Colonic mucosa (tissue), 4 donors: ENCODE measurements at regions of chr3 and their contacts with region 1.

Region 1: GRCh38 chr3:14508961-14509795 is 31.0 kb downstream of the GRIP2 start:
- DNase-seq: peak; percentile 71
- H3K4me3 ChIP-seq: no peak overlapping the region
- H3K27ac ChIP-seq: no peak overlapping the region
- H3K4me1 ChIP-seq: no peaks in the 10 kb centered on the region
- H3K27me3 ChIP-seq: no peaks in the 10 kb centered on the region
- CTCF ChIP-seq: peak; percentile 95

Region 2: DNA sequence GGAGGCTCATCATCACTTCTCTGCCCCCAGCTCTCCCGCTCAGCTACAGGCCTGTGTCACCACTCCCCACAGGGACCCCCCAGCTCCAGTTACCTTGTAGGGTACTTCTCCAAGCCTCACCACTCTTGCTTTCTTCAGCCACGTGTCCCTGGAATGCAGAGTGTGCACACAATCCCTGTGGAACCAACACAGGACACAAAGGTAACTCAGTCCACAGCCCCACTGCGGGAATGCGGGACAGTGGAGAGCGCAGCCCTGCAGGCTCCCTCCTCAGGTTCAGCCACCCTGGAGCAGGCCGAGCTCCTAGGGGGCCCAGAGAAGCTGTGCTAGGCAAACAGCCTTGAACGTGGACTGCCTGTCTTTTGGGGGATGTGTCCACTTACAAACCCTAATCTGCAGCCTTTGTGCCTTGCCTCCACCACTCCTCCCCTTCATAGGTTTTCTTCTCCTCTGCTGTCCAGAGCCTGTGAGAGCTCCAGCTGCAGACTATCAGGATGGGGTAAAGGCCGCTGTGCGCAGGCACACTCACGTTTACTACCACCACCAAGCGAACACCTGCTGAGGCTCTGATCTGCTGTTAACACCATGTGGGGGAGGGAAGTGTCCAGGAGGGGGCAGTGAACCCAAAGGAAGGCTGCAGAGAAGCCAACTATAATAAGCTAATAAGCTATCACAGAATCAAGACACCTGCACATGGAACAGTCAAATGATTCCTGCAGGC is 356.8 kb before region 1 on chr3:
- intact Hi-C with region 1: no loop called
- DNase-seq: no peak
- H3K4me3 ChIP-seq: no peak overlapping the region
- H3K27ac ChIP-seq: no peak overlapping the region
- H3K4me1 ChIP-seq: no peaks in the 10 kb centered on the region
- H3K27me3 ChIP-seq: no peaks in the 10 kb centered on the region
- CTCF ChIP-seq: no peak

Region 3: GRCh38 chr3:14548321-14548729 is 39.1 kb after region 1 on chr3:
- intact Hi-C with region 1: loop called (anchors 5 kb)
- DNase-seq: peak; percentile 56
- H3K4me3 ChIP-seq: no peak overlapping the region
- H3K27ac ChIP-seq: no peak overlapping the region
- H3K4me1 ChIP-seq: no peaks in the 10 kb centered on the region
- H3K27me3 ChIP-seq: no peaks in the 10 kb centered on the region
- CTCF ChIP-seq: peak; percentile 53

Region 4: DNA sequence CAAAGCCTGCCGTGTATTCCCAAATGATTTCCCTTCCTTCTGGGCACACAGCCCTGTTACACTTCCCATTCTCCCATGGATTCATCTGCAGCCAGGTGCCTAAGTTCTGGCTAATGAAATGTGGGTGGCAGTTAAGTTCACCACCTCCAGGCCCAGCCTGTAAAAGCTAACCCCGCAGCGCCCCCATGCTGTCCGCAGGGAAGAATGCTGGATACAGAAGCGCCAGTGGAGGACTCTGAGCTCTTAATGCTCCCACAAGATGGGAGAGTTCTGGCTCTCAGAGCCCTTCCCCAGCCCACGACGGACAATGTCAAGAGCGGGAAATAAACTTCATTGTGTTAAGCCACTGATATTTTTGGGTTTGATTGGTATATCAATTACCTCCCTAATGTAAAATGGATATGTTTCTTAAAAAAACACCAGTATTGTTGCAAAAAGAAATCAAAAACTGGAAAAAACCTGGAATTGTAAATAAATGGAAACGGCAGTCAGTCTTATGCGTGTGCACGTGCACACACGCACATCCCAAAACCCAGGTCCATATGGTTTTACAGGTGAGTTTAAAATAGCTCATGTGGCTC is 271.8 kb after region 1 on chr3:
- intact Hi-C with region 1: loop called (anchors 10 kb)
- DNase-seq: peak; percentile 57
- H3K4me3 ChIP-seq: no peak overlapping the region
- H3K27ac ChIP-seq: no peak overlapping the region
- H3K4me1 ChIP-seq: no peaks in the 10 kb centered on the region
- H3K27me3 ChIP-seq: no peaks in the 10 kb centered on the region
- CTCF ChIP-seq: peak; percentile 43

Region 5: GRCh38 chr3:15032650-15033049 is 523.5 kb after region 1 on chr3:
- intact Hi-C with region 1: no loop called
- DNase-seq: no peak
- H3K4me3 ChIP-seq: no peak overlapping the region
- H3K27ac ChIP-seq: no peak overlapping the region
- H3K4me1 ChIP-seq: no peaks in the 10 kb centered on the region
- H3K27me3 ChIP-seq: no peaks in the 10 kb centered on the region
- CTCF ChIP-seq: no peak